CD8-positive, alpha-beta memory T cell (primary cell): ENCODE measurements at regions of chr18 and their contacts with region 1.

Region 1: GRCh38 chr18:62982600-62983251 is 267.4 kb downstream of the PHLPP1 start:
- DNase-seq: peak; percentile 26 to 64 (median 39)
- H3K4me3 ChIP-seq: no peak overlapping the region
- H3K4me3 Mint-ChIP-seq: peak overlapping the region in 6 of 7 donors; percentile 51 to 71 (median 59)
- H3K27ac ChIP-seq: no peak overlapping the region
- H3K27ac Mint-ChIP-seq: peak overlapping the region in 1 of 8 donors; percentile 72
- H3K4me1 ChIP-seq: peaks cover 5% of the 10 kb centered on the region
- H3K4me1 Mint-ChIP-seq: peaks cover 7 to 8% (median 8%) of the 10 kb centered on the region in 3 donors
- H3K27me3 ChIP-seq: no peaks in the 10 kb centered on the region
- H3K27me3 Mint-ChIP-seq: peaks cover 0 to 2% of the 10 kb centered on the region in 2 donors

Region 2: GRCh38 chr18:62584241-62585120 is 398.2 kb before region 1 on chr18:
- CTCF ChIA-PET with region 1: interaction called, 16 read pairs
- POLR2A ChIA-PET with region 1: no interaction called
- DNase-seq: peak; percentile 70 to 86 (median 80)
- H3K4me3 ChIP-seq: no peak overlapping the region
- H3K4me3 Mint-ChIP-seq: peak overlapping the region; percentile 0 to 63 (median 35)
- H3K27ac ChIP-seq: no peak overlapping the region
- H3K27ac Mint-ChIP-seq: peak overlapping the region; percentile 15 to 88 (median 64)
- H3K4me1 ChIP-seq: peaks cover 25% of the 10 kb centered on the region
- H3K4me1 Mint-ChIP-seq: peaks cover 34 to 42% (median 34%) of the 10 kb centered on the region in 3 donors
- H3K27me3 ChIP-seq: no peaks in the 10 kb centered on the region
- H3K27me3 Mint-ChIP-seq: no peaks in the 10 kb centered on the region

Region 3: GRCh38 chr18:62637807-62638687 is 344.7 kb before region 1 on chr18:
- CTCF ChIA-PET with region 1: interaction called, 13 read pairs
- POLR2A ChIA-PET with region 1: no interaction called
- DNase-seq: peak; percentile 16 to 67 (median 29)
- H3K4me3 ChIP-seq: no peak overlapping the region
- H3K4me3 Mint-ChIP-seq: no peak overlapping the region
- H3K27ac ChIP-seq: no peak overlapping the region
- H3K27ac Mint-ChIP-seq: no peak overlapping the region
- H3K4me1 ChIP-seq: no peaks in the 10 kb centered on the region
- H3K4me1 Mint-ChIP-seq: no peaks in the 10 kb centered on the region
- H3K27me3 ChIP-seq: no peaks in the 10 kb centered on the region
- H3K27me3 Mint-ChIP-seq: peaks cover 3 to 42% of the 10 kb centered on the region in 2 donors

Region 4: DNA sequence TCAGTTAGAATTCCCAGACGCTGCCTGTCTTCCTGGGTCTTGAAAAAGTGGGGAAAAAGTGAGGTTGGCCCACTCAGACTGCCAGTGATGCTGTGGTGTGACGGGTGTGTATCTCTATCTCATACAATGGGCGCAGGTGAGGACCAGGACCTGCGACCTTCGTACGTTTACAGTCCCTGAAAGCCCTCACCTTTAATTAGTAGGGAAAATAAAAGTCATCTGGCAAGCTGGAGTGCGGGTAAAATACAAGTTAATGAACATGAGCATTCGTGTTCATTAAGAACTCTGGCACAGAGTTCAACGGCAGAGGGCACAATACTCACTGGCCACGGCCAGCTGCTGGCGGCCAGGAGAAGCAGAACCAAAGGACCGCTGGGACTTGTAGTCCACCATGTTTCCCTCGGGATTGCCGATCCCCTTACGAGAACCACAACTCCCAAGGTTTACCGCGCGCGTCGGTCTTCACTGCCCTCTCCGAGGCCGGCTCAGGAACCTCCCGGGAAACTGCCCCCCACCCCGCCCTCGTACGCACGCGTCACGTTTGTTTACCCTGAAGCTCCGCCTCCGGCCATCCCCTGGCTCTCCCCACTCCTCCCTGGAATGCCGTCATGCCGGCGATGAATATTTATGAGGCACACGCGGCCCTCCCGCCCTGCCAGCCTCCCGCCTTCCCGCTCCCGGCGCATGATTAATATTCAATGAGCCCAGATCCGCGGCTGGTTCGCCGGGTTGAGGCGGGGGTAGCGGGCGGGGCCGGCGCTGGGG is 267.9 kb before region 1 on chr18:
- CTCF ChIA-PET with region 1: interaction called, 45 read pairs
- POLR2A ChIA-PET with region 1: interaction called, 4 read pairs
- DNase-seq: peak; percentile 86 to 96 (median 90)
- H3K4me3 ChIP-seq: peak overlapping the region; percentile 92
- H3K4me3 Mint-ChIP-seq: peak overlapping the region; percentile 92 to 99 (median 95)
- H3K27ac ChIP-seq: peak overlapping the region; percentile 77
- H3K27ac Mint-ChIP-seq: peak overlapping the region; percentile 90 to 100 (median 98)
- H3K4me1 ChIP-seq: peaks cover 17% of the 10 kb centered on the region
- H3K4me1 Mint-ChIP-seq: peaks cover 32 to 37% (median 37%) of the 10 kb centered on the region in 3 donors
- H3K27me3 ChIP-seq: no peaks in the 10 kb centered on the region
- H3K27me3 Mint-ChIP-seq: no peaks in the 10 kb centered on the region

Region 5: GRCh38 chr18:63138436-63139340 is 156.0 kb after region 1 on chr18:
- CTCF ChIA-PET with region 1: no interaction called
- POLR2A ChIA-PET with region 1: no interaction called
- DNase-seq: no peak
- H3K4me3 ChIP-seq: peak overlapping the region; percentile 42
- H3K4me3 Mint-ChIP-seq: peak overlapping the region; percentile 53 to 94 (median 87)
- H3K27ac ChIP-seq: no peak overlapping the region
- H3K27ac Mint-ChIP-seq: peak overlapping the region; percentile 86 to 97 (median 94)
- H3K4me1 ChIP-seq: peaks cover 30% of the 10 kb centered on the region
- H3K4me1 Mint-ChIP-seq: peaks cover 52 to 79% (median 76%) of the 10 kb centered on the region in 3 donors
- H3K27me3 ChIP-seq: no peaks in the 10 kb centered on the region
- H3K27me3 Mint-ChIP-seq: peaks cover 0 to 2% of the 10 kb centered on the region in 2 donors

Region 6: GRCh38 chr18:63299837-63300745 is 317.4 kb after region 1 on chr18:
- CTCF ChIA-PET with region 1: no interaction called
- POLR2A ChIA-PET with region 1: no interaction called
- DNase-seq: no peak
- H3K4me3 ChIP-seq: peak overlapping the region; percentile 4
- H3K4me3 Mint-ChIP-seq: peak overlapping the region; percentile 47 to 83 (median 74)
- H3K27ac ChIP-seq: no peak overlapping the region
- H3K27ac Mint-ChIP-seq: peak overlapping the region; percentile 89 to 98 (median 94)
- H3K4me1 ChIP-seq: peaks cover 71% of the 10 kb centered on the region
- H3K4me1 Mint-ChIP-seq: peaks cover 72 to 89% (median 83%) of the 10 kb centered on the region in 3 donors
- H3K27me3 ChIP-seq: no peaks in the 10 kb centered on the region
- H3K27me3 Mint-ChIP-seq: no peaks in the 10 kb centered on the region